Calu3 (cell line): ENCODE measurements at regions of chr1 and their contacts with region 1.

Region 1: GRCh38 chr1:218674280-218674773 is 329.2 kb downstream of the TGFB2 start:
- DNase-seq: peak; percentile 76
- H3K4me3 Mint-ChIP-seq: peak overlapping the region; percentile 28
- H3K27ac Mint-ChIP-seq: peak overlapping the region; percentile 59
- H3K4me1 Mint-ChIP-seq: peaks cover 19% of the 10 kb centered on the region
- H3K27me3 Mint-ChIP-seq: no peaks in the 10 kb centered on the region
- CTCF ChIP-seq: no peak

Region 2: DNA sequence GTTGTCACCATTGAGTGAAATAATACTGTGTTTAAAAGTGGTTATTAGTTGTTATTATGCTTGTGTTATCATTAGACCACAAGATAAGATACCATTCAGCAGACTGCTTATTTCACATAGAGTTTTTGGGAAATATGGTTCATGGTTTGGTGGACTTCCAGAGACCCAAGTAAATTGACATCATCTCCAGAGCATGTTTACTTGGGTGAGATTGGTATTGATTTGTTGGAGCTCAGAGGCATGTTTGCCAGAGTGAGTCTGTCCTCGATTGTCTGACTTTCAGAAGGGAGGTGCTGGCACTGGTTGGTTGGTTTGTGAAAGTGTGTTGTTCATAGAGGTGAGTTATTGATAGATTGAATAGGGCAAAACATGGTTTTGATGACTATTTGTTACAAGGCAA is 37.8 kb before region 1 on chr1:
- CTCF ChIA-PET with region 1: no interaction called
- intact Hi-C with region 1: no loop called
- DNase-seq: no peak
- H3K4me3 Mint-ChIP-seq: no peak overlapping the region
- H3K27ac Mint-ChIP-seq: no peak overlapping the region
- H3K4me1 Mint-ChIP-seq: peaks cover 9% of the 10 kb centered on the region
- H3K27me3 Mint-ChIP-seq: no peaks in the 10 kb centered on the region
- CTCF ChIP-seq: no peak

Region 3: GRCh38 chr1:218739426-218739825 is 65.1 kb after region 1 on chr1:
- CTCF ChIA-PET with region 1: no interaction called
- intact Hi-C with region 1: no loop called
- DNase-seq: no peak
- H3K4me3 Mint-ChIP-seq: no peak overlapping the region
- H3K27ac Mint-ChIP-seq: no peak overlapping the region
- H3K4me1 Mint-ChIP-seq: peaks cover 24% of the 10 kb centered on the region
- H3K27me3 Mint-ChIP-seq: no peaks in the 10 kb centered on the region
- CTCF ChIP-seq: no peak

Region 4: DNA sequence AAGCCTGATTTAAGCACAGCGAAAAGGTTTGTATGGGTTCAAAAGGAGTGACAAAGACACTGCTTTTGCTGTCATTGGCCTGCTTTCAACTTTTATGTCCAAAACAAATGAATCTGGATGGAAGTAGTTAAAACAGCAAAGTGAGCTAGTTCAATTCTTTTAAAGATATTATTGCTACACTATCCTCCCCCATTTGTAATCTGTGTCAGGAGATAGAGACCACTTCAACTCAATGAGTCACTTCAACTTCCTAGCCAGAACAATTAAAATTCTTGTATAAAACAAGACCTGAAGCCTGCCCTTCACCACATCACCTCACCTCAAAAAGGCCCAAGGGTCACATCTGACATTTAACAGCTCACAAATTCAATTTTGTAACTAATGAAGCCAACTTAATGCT is 135.3 kb after region 1 on chr1:
- CTCF ChIA-PET with region 1: no interaction called
- intact Hi-C with region 1: no loop called
- DNase-seq: no peak
- H3K4me3 Mint-ChIP-seq: no peak overlapping the region
- H3K27ac Mint-ChIP-seq: no peak overlapping the region
- H3K4me1 Mint-ChIP-seq: peaks cover 31% of the 10 kb centered on the region
- H3K27me3 Mint-ChIP-seq: no peaks in the 10 kb centered on the region
- CTCF ChIP-seq: no peak

Region 5: DNA sequence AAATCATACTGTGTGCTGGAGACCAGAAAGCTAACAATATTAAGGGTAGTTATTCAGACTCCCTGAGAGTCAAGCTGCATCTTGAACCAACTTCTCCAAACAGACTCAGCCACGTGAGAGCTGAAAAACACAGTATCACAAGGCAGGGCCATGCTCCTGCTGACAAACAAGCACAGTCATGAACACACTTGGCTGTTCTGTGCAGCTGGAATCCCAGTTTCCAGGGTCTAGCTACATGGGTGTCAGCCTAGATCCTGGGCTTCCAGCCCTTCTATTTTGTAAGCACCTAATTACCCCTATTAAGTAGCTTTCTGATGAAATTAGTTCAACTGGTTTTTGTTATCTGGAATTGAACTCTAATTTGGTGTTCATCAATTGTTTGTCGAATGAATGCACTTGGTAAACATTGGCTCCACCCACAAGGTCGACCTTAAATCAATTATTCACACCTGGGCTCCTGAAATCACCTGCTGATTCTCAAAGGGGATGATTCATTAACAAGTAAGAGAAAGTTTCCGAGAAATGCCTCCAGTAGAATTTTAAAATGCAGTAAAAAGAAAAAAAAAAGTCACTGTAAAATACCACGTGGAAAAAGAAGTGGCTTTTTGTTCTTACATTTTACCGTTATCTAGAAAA is 759.3 kb after region 1 on chr1:
- CTCF ChIA-PET with region 1: interaction called, 10 read pairs
- intact Hi-C with region 1: no loop called
- DNase-seq: no peak
- H3K4me3 Mint-ChIP-seq: no peak overlapping the region
- H3K27ac Mint-ChIP-seq: no peak overlapping the region
- H3K4me1 Mint-ChIP-seq: no peaks in the 10 kb centered on the region
- H3K27me3 Mint-ChIP-seq: no peaks in the 10 kb centered on the region
- CTCF ChIP-seq: no peak